ENCODE measurements at regions of chr4 and their contacts with region 1.

Region 1: DNA sequence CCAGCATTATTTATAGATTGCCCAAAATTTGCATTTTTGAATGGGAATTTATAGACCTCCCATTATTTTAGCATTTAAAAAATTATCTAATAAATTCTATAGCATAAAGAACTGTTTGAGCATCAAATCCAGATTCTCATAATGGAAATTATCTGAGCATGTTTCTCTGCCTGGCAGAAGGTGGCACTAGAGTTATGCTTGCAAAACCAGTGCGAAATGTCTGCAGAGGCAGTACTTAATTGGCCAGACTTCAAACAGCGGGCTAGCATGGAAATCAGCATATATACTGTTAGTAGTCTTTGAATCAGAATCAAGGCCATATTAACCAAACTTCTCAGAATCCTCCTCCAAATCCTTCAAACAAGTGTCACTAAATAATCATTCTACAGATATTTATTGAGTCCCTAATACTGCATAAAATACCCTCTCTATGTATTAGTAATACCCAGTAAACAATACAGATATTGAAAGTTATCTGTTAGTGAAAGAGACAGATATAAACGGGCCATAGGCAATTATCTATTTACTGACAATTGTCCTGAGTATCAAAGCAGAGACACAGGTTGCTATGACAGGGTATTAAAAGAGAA is 78.7 kb upstream of the DCLK2 start:
- DNase-seq: no peak

Region 2: GRCh38 chr4:149441338-149441737 is 558.2 kb before region 1 on chr4:
- intact Hi-C with region 1: no loop called
- DNase-seq: no peak

Region 3: DNA sequence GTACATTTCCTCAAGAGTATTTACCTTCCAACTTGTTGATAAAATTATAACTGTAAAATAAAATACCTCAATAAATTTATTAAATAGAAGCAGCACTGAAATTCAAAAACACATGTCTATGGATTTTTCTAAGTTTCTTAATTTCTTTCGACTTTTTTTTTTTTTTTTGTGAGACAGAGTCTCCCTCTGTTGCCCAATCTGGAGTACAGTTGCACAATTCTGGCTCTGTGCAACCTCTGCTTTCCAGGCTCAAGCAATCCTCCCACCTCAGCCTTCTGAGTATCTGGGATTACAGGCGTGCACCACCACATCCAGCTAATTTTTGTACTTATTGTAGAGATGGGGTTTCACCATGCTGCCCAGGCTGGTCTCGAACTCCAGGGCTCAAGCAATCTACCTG is 263.8 kb before region 1 on chr4:
- intact Hi-C with region 1: no loop called
- DNase-seq: no peak

Region 4: DNA sequence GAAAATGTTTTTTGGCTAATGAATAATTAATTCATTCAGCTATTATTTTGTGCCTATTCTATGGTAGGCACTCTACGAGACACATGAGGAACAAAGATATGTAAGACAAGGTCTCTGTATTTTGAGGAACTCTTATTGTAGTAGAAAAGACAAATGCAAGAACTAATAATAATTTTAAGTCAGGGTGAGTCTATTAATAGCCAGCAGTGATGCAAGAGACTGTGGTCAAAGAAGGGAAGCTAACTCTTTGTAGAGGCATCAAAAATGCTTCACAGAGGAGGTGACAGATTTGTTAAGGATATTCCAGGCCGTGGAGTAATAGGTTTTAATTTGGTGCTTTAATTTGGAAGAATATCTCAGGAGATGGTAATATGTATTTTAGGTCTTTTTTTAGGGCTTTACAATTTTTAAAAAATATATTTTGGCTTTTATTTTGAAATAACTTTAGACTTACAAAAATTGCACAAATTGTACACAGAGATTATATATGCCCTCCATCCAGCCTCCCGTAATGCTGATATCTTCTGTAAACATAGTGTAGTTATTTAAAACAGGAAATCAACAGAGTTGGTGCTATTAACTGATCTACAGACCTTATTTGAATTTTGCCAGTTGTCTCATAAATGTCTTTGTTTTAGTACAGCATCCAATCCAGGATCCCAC is 126.8 kb after region 1 on chr4:
- intact Hi-C with region 1: no loop called
- DNase-seq: no peak

Region 5: DNA sequence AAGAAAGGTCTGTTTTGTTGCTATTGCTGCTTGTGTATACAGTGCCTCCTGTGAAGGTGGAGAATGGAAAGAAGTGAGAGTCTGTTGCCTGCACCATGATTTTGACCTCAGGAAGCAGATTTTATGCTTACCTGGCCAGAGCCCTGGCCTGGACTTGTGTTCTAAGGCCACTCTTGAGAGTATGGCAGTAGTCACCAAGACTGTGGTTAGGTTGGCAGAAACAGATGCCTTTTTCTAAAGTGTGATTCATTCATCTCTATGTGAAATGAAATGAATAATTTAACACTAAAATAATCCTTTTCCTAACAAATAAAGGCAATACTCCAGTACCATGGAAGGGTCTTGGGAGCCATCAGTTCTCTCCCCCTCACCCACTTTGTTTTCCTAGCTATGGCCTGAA is 240.4 kb after region 1 on chr4:
- intact Hi-C with region 1: loop called (anchors 2 kb)
- DNase-seq: no peak

Region 6: GRCh38 chr4:150632639-150633038 is 633.1 kb after region 1 on chr4:
- intact Hi-C with region 1: no loop called
- DNase-seq: no peak

Region 7: DNA sequence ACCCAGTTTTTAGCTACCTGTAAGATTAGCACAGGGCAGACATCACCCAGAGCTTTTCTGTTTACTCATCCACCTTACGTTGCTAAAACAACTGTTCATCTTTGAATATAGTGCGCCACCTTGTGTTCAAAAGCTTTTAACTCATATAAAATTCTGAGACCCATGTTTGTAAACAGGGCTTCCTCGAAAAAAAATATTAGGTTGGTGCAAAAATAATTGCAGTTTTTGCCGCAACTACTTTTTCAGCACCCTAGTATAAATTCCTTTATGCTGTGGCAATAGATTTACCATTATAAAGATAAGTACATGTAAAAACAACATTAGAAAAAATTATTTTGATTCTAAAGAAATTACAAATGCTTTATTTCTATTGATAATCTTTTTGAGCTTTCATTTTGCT is 867.6 kb after region 1 on chr4:
- intact Hi-C with region 1: loop called (anchors 10 kb)
- DNase-seq: no peak